HepG2 (cell line): ENCODE measurements at regions of chr12 and their contacts with region 1.

Region 1: GRCh38 chr12:6335451-6336078 is 6.3 kb downstream of the TNFRSF1A start:
- DNase-seq: peak; percentile 90
- ATAC-seq: peak; percentile 74
- H3K4me3 ChIP-seq: peak overlapping the region; percentile 29 to 99 (median 41); a peak in 5 of 6 replicates
- H3K27ac ChIP-seq: peak overlapping the region; percentile 97
- H3K4me1 ChIP-seq: peaks cover 62% of the 10 kb centered on the region
- H3K27me3 ChIP-seq: no peaks in the 10 kb centered on the region; a peak in 1 of 5 replicates
- CTCF ChIP-seq: peak; percentile 92
- EP300 ChIP-seq: peak in 1 of 2 experiments; percentile 5; a peak in 1 of 4 replicates
- POLR2A ChIP-seq: no peak; a peak in 2 of 4 replicates
- RAD21 ChIP-seq: peak; percentile 84

Region 2: DNA sequence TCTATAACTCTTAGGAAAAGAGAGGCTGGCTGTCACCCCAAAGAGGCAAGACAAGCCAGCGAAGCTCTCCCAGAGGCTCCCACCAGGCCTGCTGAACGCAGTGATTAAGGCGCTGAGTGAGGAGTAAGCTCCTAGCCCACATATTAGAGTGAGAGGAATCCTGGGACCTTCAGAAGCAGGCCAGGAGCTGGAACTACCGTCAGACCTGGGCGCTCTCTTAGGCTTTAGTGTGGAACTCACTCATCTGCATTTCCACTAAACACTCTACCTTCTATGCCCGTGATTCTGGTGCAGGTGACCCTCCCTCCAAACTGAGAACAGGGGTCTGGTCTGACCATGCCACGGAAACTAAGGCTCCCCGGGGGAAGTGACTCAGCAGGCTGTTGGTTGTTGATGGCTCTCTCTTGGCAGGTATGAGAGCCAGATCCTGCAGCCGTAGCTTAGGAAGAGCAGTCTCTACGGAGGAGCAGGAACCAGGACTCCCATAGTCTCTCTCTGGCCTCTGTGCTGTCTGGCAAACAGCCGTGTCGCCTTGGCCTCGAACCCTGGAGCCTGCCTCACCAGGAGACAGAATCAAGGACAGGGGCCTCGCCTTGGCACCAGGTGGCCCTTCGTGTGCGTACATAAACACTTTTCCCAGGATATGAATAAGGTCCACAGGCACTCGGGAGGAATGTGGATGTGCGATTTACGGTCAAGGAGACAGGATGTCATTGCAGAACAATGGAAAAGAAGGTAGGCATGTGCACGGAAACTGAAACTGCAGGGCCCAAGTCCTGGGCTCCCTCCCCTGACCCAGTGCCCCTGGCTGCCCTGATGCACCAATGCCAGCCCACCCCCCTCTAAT is 219.2 kb before region 1 on chr12:
- CTCF ChIA-PET with region 1: no interaction called
- POLR2A ChIA-PET with region 1: no interaction called
- in situ Hi-C with region 1: no loop called
- intact Hi-C with region 1: no loop called
- DNase-seq: peak; percentile 28
- ATAC-seq: peak; percentile 49
- H3K4me3 ChIP-seq: no peak overlapping the region; a peak in 1 of 6 replicates
- H3K27ac ChIP-seq: no peak overlapping the region
- H3K4me1 ChIP-seq: peaks cover 36% of the 10 kb centered on the region
- H3K27me3 ChIP-seq: peaks cover 9 to 49% of the 10 kb centered on the region in 2 experiments; a peak in 4 of 5 replicates
- CTCF ChIP-seq: no peak
- EP300 ChIP-seq: no peak
- POLR2A ChIP-seq: no peak
- RAD21 ChIP-seq: no peak

Region 3: GRCh38 chr12:6285063-6285477 is 50.5 kb before region 1 on chr12:
- CTCF ChIA-PET with region 1: no interaction called
- POLR2A ChIA-PET with region 1: interaction called, 14 read pairs
- in situ Hi-C with region 1: no loop called
- intact Hi-C with region 1: no loop called
- DNase-seq: peak; percentile 70
- ATAC-seq: peak; percentile 78
- H3K4me3 ChIP-seq: no peak overlapping the region
- H3K27ac ChIP-seq: no peak overlapping the region
- H3K4me1 ChIP-seq: peaks cover 63% of the 10 kb centered on the region
- H3K27me3 ChIP-seq: no peaks in the 10 kb centered on the region
- CTCF ChIP-seq: peak; percentile 92
- EP300 ChIP-seq: no peak
- POLR2A ChIP-seq: no peak
- RAD21 ChIP-seq: peak; percentile 95

Region 4: DNA sequence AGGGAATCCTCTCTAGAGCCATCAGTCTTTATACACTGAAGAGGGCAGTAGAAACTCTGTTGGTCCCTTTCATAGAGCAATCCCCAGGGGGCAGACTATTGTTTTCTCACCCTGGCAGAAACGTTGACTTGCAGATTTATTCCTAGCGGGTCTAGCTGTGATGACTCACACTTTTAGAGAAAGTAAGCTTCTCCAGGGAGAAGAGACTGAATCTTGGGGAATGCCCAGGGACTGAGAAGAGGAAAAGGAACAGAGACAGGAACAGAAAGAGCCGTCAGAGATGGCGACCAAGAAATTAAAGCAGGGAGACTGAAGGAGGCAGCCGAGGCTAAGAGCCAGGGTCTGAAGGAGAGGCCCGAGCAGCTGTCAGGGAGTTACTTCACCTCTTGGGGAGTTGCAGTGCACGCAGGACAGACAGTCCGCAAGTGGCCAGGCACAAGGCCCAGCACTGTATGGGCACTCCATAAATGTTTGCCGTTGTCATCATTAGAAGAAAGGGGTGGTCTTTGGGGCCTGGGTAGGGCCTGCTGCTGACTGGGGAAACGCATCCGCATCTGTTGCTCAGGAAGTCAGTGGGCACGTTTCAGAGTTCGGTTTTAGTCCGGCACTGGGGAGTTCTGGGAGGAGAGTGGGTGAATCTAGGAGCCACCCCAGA is 12.1 kb before region 1 on chr12:
- CTCF ChIA-PET with region 1: no interaction called
- POLR2A ChIA-PET with region 1: interaction called, 82 read pairs
- in situ Hi-C with region 1: no loop called
- intact Hi-C with region 1: loop called (anchors 1 kb)
- DNase-seq: peak; percentile 78
- ATAC-seq: peak; percentile 67
- H3K4me3 ChIP-seq: no peak overlapping the region
- H3K27ac ChIP-seq: peak overlapping the region; percentile 37
- H3K4me1 ChIP-seq: peaks cover 46% of the 10 kb centered on the region
- H3K27me3 ChIP-seq: no peaks in the 10 kb centered on the region
- CTCF ChIP-seq: peak; percentile 58
- EP300 ChIP-seq: no peak
- POLR2A ChIP-seq: no peak
- RAD21 ChIP-seq: peak; percentile 48; the same call in 1 of the 2 replicates

Region 5: DNA sequence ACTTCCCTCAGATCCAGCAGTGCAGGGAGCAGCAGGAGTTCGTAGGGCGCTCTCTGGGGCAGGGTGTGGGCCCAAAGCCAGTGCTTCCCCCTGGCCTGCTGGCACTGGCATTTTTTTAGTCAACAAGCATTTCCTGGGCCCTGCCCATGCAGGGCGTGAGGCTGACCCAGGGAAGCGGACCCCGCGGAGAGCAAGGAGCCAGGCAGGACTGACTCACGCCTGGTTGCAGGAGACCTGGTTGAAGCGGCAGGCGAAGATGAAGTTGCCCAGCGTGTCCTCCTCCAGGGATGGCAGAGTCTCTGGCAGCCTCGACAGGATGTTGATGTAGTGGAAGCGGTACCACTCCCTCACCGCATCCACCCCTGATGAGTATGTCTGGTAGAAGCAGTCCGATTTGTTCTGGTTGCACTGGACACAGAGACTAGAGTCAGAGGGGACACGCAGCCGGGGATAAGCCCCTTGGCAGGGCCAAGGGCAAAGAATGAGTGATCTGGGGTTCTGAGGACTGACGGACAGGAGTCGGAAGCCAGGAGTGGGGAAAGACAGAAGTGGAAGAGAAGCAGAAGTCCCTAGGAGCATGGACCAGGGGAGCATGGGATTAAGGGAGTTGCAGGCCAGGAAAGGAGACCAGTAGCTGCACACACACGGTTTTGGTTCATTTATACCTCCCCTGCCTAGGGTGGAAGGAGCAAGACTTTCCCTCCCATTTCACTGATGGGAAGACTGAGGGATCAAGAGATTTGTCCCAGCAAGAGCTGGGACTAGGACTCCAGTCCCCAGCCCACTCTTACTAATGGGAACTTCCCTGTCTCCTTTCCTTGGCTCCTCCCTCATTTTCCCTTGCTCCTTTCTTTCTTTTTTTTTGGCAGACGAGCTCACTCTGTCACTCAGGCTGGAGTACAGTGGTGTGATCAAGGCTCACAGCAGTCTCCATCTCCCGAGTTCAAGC is 26.5 kb after region 1 on chr12:
- CTCF ChIA-PET with region 1: interaction called, 3 read pairs
- POLR2A ChIA-PET with region 1: interaction called, 220 read pairs
- in situ Hi-C with region 1: no loop called
- intact Hi-C with region 1: no loop called
- DNase-seq: no peak
- ATAC-seq: no peak
- H3K4me3 ChIP-seq: no peak overlapping the region
- H3K27ac ChIP-seq: no peak overlapping the region
- H3K4me1 ChIP-seq: peaks cover 46% of the 10 kb centered on the region
- H3K27me3 ChIP-seq: no peaks in the 10 kb centered on the region
- CTCF ChIP-seq: no peak
- EP300 ChIP-seq: no peak
- POLR2A ChIP-seq: no peak
- RAD21 ChIP-seq: no peak

Region 6: DNA sequence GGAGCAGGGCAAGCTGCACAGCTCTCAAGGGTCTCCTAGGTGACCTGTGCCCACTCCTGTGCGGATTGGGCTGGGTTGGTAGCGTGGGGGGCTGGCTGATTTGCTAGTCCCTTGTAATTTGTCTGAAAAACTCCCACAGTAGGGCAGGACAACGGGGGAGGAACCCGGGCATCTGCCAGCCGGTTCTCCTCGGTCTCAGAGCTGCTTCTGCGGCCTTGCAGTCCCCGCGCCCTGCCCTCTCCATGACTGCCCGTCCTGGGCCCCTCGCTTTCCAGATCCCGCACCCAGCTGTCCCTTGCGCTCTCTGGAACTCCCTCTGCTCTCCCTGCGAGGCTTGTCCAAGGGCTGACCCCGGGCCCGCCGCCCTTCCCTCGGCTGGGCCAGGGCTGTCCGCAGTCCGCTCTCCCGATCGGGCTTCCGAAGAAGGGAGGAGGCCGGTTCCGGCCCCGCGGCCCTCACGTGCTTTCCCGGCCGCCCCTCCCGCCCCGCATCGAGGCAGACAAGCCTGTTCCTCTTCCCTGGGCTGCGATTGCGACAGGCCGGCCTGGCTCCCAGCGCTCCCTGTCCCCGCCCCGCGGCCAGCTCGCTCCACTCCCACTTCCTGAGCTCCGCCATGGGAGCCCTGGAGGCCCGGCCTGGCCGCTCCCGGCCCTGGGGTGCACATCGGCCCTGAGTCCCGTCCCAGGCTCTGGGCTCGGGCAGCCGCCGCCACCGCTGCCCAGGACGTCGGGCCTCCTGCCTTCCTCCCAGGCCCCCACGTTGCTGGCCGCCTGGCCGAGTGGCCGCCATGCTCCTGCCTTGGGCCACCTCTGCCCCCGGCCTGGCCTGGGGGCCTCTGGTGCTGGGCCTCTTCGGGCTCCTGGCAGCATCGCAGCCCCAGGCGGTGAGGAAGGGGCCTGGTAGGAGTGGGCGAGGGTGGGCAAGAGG is 48.3 kb after region 1 on chr12 and contains the start of gene LTBR:
- CTCF ChIA-PET with region 1: no interaction called
- POLR2A ChIA-PET with region 1: interaction called, 140 read pairs
- in situ Hi-C with region 1: no loop called
- intact Hi-C with region 1: no loop called
- DNase-seq: peak; percentile 83
- ATAC-seq: peak; percentile 91
- H3K4me3 ChIP-seq: peak within 1 kb of the TSS; percentile 81 to 95 (median 87)
- H3K27ac ChIP-seq: peak within 1 kb of the TSS; percentile 86
- H3K4me1 ChIP-seq: peaks cover 59% of the 10 kb centered on the region
- H3K27me3 ChIP-seq: no peaks in the 10 kb centered on the region; a peak in 1 of 5 replicates
- CTCF ChIP-seq: peak; percentile 52; the same call in 1 of the 2 replicates
- EP300 ChIP-seq: peak in 1 of 2 experiments; percentile 33; a peak in 1 of 4 replicates
- POLR2A ChIP-seq: peak; percentile 67 to 74; a peak in 3 of 4 replicates
- RAD21 ChIP-seq: peak; percentile 36; the same call in 1 of the 2 replicates
- total RNA-seq, gene LTBR: 12.1 and 34.8 TPM in 2 replicates

Region 7: GRCh38 chr12:6470375-6471163 is 135.0 kb after region 1 on chr12 and contains the start of gene VAMP1:
- CTCF ChIA-PET with region 1: no interaction called
- POLR2A ChIA-PET with region 1: interaction called, 32 read pairs
- in situ Hi-C with region 1: no loop called
- intact Hi-C with region 1: loop called (anchors 10 kb)
- DNase-seq: peak; percentile 97
- ATAC-seq: peak; percentile 96
- H3K4me3 ChIP-seq: peak within 1 kb of the TSS; percentile 69 to 76 (median 74)
- H3K27ac ChIP-seq: peak within 1 kb of the TSS; percentile 56
- H3K4me1 ChIP-seq: peaks cover 44% of the 10 kb centered on the region
- H3K27me3 ChIP-seq: no peaks in the 10 kb centered on the region
- CTCF ChIP-seq: peak; percentile 34
- EP300 ChIP-seq: no peak
- POLR2A ChIP-seq: peak; percentile 99 to 100
- RAD21 ChIP-seq: no peak
- total RNA-seq, gene VAMP1: 0.45 and 2.5 TPM in 2 replicates

Region 8: DNA sequence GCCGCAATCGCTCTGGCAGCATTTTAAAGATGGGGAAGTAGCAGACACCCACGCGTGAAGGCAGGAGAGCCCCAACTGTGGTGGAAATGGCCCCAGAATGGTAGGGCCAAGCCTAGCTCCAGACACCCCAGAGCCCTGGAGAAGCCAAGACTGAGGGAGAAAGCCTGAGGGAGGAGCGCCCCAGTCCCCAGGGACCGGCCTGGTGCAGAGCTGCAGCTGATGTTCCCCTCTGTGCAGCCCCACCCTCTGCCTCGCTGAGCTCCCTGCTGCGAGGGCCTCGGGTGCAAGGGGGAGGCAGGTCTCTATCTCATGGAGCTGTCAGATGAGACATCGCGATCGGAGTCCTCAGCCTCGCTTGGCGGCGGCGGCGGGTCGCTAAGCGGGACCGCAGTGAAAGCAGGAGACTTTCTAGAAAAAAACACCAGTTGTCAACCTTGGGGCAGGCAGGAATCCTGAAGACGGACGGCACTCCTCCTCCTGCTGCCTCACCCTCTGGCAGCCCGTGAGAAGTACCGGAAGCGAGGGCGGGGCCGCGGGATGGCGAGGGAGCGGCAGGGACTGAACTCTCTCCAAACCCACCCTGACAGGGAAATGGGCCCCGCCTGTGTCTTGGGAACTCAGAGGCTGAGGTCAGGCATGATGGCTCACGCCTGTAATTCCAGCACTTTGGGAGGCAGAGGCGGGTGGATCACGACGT is 204.8 kb after region 1 on chr12:
- CTCF ChIA-PET with region 1: no interaction called
- POLR2A ChIA-PET with region 1: interaction called, 27 read pairs
- in situ Hi-C with region 1: no loop called
- intact Hi-C with region 1: loop called (anchors 10 kb)
- DNase-seq: no peak
- ATAC-seq: peak; percentile 2
- H3K4me3 ChIP-seq: no peak overlapping the region
- H3K27ac ChIP-seq: no peak overlapping the region
- H3K4me1 ChIP-seq: peaks cover 53% of the 10 kb centered on the region
- H3K27me3 ChIP-seq: no peaks in the 10 kb centered on the region; a peak in 1 of 5 replicates
- CTCF ChIP-seq: no peak
- EP300 ChIP-seq: no peak
- POLR2A ChIP-seq: no peak
- RAD21 ChIP-seq: no peak

Region 9: DNA sequence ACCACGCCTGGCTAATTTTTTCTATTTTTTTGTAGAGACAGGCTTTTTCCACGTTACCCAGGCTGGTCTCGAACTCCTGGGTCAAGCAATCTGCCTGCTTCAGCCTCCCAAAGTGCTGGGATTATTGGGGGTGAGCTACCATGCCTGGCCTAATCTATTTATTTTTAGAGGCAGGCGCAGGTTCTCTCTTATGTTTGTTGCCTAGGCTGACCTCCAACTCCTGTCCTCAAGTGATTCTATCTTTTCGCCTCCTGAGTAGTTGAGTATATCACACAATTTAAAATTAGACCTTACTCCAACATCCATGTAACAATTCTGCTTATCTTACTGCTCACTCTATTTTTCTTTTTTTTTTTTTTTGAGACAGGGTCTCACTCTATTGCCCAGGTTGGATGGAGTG is 318.4 kb after region 1 on chr12:
- CTCF ChIA-PET with region 1: no interaction called
- POLR2A ChIA-PET with region 1: no interaction called
- in situ Hi-C with region 1: no loop called
- intact Hi-C with region 1: no loop called
- DNase-seq: no peak
- ATAC-seq: no peak
- H3K4me3 ChIP-seq: no peak overlapping the region
- H3K27ac ChIP-seq: no peak overlapping the region
- H3K4me1 ChIP-seq: no peaks in the 10 kb centered on the region
- H3K27me3 ChIP-seq: no peaks in the 10 kb centered on the region
- CTCF ChIP-seq: no peak
- EP300 ChIP-seq: no peak
- POLR2A ChIP-seq: no peak
- RAD21 ChIP-seq: no peak